Transverse colon (tissue), 4 donors: ENCODE measurements at regions of chr14 and their contacts with region 1.

Region 1: DNA sequence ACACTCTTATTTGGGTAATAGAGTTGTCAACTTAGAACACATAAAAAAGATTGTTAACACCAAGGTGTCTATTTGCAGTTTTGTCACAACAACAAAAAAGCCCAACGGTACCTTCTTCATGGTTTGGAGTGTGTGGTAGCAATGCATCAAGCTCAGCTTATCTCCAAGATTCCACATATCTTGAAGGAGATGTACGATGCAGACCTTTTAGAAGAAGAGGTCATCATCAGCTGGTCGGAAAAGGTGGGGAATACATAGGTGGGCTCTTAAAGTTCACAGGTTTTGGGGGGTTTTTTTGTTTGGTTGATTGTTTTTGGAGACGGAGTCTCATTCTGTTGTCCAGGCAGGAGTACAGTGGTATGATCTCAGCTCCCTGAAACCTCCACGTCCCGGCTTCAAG is 5.5 kb downstream of the EIF5 start:
- DNase-seq: no peak
- H3K4me3 ChIP-seq: no peak overlapping the region
- H3K27ac ChIP-seq: no peak overlapping the region
- H3K4me1 ChIP-seq: peaks cover 8 to 27% (median 12%) of the 10 kb centered on the region in 4 donors
- H3K27me3 ChIP-seq: no peaks in the 10 kb centered on the region
- CTCF ChIP-seq: no peak
- EP300 ChIP-seq: no peak
- POLR2A ChIP-seq: no peak

Region 2: GRCh38 chr14:102840756-102841528 is 498.6 kb before region 1 on chr14:
- in situ Hi-C with region 1: no loop called
- intact Hi-C with region 1: no loop called
- DNase-seq: no peak
- H3K4me3 ChIP-seq: no peak overlapping the region
- H3K27ac ChIP-seq: no peak overlapping the region
- H3K4me1 ChIP-seq: no peaks in the 10 kb centered on the region
- H3K27me3 ChIP-seq: no peaks in the 10 kb centered on the region
- CTCF ChIP-seq: no peak
- EP300 ChIP-seq: no peak
- POLR2A ChIP-seq: no peak

Region 3: DNA sequence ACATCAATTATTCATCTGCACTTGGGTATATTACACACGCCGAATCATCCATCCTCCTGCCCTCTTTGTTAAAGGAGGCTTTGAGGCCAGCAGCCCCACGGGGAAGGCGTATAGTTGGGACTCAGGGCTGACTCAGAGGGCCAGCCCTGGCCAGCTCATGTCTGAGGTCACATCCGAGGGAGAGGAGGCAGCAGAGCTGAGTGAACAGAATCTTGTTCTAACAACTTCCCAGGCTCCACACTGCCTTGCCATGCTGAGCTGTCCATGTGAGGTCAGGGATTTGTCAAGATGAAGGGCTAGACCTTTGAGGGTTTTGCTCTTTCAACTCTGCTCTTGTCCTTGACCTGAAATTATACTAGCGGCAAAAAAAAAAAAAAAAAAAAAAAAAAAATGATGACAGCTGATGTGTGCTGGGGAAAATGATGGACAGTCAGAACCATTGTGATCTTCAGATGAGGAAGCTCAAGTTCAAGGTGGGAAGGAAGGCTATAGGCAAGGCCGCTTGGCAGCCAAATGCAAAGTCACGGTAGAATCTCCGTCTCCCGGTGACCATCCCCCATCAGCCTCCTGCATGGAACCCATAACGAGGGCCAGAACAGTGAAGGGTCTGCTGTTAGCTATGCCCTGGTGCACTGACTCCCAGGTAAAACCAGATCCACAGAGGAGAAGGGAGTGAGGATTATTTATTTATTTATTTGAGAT is 33.2 kb after region 1 on chr14:
- in situ Hi-C with region 1: no loop called
- intact Hi-C with region 1: loop called (anchors 1 kb)
- DNase-seq: no peak
- H3K4me3 ChIP-seq: no peak overlapping the region
- H3K27ac ChIP-seq: no peak overlapping the region
- H3K4me1 ChIP-seq: no peaks in the 10 kb centered on the region
- H3K27me3 ChIP-seq: no peaks in the 10 kb centered on the region
- CTCF ChIP-seq: no peak
- EP300 ChIP-seq: no peak
- POLR2A ChIP-seq: no peak